ENCODE measurements at regions of chr6 and their contacts with region 1.

Region 1: DNA sequence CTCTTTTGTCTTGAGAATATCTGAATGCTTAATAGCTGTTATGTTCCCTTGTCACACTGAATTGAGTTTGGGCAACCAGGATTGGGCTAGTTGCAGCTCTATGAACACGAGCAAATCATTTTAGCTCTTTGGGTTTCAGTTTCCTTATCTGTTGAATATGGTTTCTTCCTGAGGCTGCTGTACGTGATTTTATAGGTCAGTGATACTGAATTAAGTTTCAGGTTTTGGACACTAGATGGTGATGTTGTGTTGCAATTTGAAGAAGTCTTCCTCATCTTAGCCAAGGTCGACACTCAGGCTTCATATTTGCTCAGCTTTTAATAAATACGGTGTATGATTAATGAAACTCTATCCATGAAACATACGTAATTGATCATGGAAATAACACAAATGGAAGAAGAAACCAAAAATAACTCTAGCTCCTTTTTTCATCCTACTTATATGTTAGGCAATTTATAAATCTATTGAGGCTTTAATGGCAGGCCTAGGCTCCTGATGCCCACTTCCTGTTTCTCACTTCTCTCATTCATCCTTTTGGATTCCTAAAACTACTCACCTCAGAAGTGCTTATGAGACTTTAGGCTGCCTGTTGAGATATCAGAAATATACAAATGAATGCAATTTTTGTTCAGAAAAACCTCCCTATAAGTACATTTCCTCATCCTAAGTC is 354.1 kb upstream of the MAP3K7 start:
- DNase-seq: peak; percentile 75
- H3K4me3 ChIP-seq: no peak overlapping the region
- H3K27ac ChIP-seq: no peak overlapping the region
- H3K4me1 ChIP-seq: no peaks in the 10 kb centered on the region
- H3K27me3 ChIP-seq: peaks cover 0 to 2% of the 10 kb centered on the region in 2 experiments
- CTCF ChIP-seq: peak; percentile 25 to 35
- POLR2A ChIP-seq: no peak

Region 2: DNA sequence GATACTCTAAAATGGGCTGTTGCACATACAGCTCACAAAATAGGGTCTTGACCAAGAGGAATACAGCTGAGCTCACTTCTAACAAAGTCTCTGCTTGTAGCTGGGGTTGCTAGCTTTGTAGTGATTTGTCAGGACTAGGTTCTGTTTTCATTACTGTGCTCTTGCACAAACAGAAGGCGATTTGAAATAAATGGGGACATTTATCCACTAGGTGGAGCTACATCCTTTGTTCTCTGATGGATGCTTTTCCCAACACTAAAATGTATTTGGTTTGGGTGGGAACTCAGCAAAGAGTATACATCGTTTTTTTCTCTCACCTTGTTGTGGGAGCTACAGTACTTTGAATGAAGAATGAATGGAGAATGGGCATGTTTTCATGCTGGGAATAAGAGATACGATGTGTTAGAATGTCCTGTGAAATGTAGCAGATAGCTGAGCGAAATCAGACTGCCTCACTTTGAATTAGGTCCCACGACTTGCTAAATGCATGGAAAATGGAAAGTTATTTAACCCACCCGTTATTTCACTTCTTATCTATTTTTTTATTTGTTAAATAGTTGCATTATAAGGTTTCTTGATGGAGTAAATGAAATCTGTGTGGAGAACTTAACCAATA is 140.6 kb after region 1 on chr6:
- CTCF ChIA-PET with region 1: interaction called, 4 read pairs
- POLR2A ChIA-PET with region 1: no interaction called
- dilution Hi-C with region 1: no loop called
- intact Hi-C with region 1: loop called (anchors 1 kb)
- DNase-seq: peak; percentile 52
- H3K4me3 ChIP-seq: no peak overlapping the region
- H3K27ac ChIP-seq: no peak overlapping the region
- H3K4me1 ChIP-seq: no peaks in the 10 kb centered on the region
- H3K27me3 ChIP-seq: no peaks in the 10 kb centered on the region
- CTCF ChIP-seq: peak; percentile 39 to 47
- POLR2A ChIP-seq: no peak

Measured in endothelial cell of umbilical vein (primary cell).